ENCODE measurements at regions of chr19 and their contacts with region 1.

Region 1: GRCh38 chr19:28437390-28438346 is 775.3 kb downstream of the UQCRFS1 start:
- DNase-seq: no peak
- ATAC-seq: no peak

Region 2: DNA sequence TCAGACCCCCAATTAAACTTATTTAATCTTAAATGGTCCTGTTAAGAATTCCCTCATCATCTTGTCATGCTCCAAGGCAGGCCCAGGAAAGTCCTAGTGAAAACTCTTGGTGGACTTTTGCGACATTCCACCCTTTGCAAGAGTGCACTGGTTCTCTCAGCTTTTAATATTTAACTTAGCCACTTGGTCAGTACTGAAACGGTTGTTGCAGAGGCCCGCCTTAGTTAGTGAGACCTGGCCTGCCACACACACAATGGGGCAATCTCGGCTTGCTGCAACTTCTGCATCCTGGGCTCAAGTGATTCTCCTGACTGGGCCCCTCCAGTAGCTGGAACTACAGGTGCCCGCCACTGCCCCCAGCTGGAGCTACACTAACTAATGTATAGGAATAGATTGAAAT is 590.7 kb before region 1 on chr19:
- intact Hi-C with region 1: no loop called
- DNase-seq: no peak
- ATAC-seq: no peak

Region 3: DNA sequence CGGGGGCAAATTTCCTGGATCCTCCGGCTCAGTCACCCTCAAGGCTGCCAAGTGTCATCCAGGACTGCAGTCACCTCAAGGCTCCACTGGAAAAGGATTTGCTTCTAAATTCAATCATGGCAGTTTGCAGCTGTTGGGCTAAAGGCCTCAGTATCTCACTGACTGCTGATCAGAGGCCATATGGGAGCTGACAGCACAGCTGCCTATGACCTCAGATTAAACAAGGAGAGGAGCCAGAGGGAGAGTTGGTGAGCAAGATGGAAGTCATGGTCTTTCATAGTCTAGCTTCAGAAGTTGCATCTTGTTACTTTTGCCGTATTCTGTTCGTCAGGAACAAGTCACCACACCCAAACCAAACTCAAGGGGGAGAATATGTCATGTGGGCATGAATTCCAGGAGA is 74.4 kb before region 1 on chr19:
- intact Hi-C with region 1: loop called (anchors 2 kb)
- DNase-seq: no peak
- ATAC-seq: no peak